Mammary epithelial cell (primary cell): ENCODE measurements at regions of chr7 and their contacts with region 1.

Region 1: GRCh38 chr7:84194543-84195271 is at the start of gene SEMA3A:
- DNase-seq: peak; percentile 93
- H3K4me3 ChIP-seq: peak within 1 kb of the TSS; percentile 45 to 84 (median 72)
- H3K27ac ChIP-seq: peak within 1 kb of the TSS; percentile 90
- H3K4me1 ChIP-seq: peaks cover 12% of the 10 kb centered on the region
- H3K27me3 ChIP-seq: no peaks in the 10 kb centered on the region
- CTCF ChIP-seq: no peak
- total RNA-seq, gene SEMA3A: 0.83 to 12.8 TPM

Region 2: GRCh38 chr7:83695128-83695960 is 499.4 kb before region 1 on chr7:
- CTCF ChIA-PET with region 1: no interaction called
- dilution Hi-C with region 1: no loop called
- in situ Hi-C with region 1: no loop called
- intact Hi-C with region 1: no loop called
- DNase-seq: no peak
- H3K4me3 ChIP-seq: no peak overlapping the region
- H3K27ac ChIP-seq: no peak overlapping the region
- H3K4me1 ChIP-seq: no peaks in the 10 kb centered on the region
- H3K27me3 ChIP-seq: no peaks in the 10 kb centered on the region
- CTCF ChIP-seq: no peak

Region 3: GRCh38 chr7:84025332-84025927 is 169.3 kb before region 1 on chr7:
- CTCF ChIA-PET with region 1: no interaction called
- dilution Hi-C with region 1: no loop called
- in situ Hi-C with region 1: loop called in 1 of 2 experiments (anchors 25 kb)
- intact Hi-C with region 1: no loop called
- DNase-seq: peak; percentile 89
- H3K4me3 ChIP-seq: no peak overlapping the region
- H3K27ac ChIP-seq: peak overlapping the region; percentile 39
- H3K4me1 ChIP-seq: peaks cover 23% of the 10 kb centered on the region
- H3K27me3 ChIP-seq: no peaks in the 10 kb centered on the region
- CTCF ChIP-seq: no peak

Region 4: DNA sequence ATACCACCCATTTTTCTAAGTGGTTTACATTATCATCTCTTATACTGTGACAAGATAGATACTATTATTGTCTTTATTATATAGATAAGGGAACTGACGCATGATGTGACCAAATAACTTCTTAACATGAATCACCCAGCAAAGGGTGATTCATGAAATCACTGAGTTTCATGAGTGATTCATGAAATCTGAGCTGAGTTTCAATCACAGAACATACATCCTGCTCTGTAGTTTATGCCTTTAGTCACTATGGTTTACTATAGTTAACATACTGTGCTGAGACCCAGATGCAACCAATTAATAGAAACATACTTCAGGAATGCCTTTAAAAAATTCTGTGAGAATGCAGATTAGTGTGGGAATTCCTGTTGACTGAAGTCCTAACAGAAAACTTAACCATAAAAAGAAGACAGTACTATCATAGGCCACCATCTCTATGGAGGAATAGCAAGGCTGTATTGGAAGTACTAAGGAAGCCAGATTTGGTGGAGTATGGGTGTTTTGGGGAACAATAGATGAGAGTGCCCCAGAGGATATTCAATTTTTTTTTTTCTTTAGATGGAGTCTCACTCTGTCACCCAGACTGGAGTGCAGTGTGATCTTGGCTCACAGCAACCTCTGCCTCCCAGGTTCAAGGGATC is 42.9 kb after region 1 on chr7:
- CTCF ChIA-PET with region 1: no interaction called
- dilution Hi-C with region 1: no loop called
- in situ Hi-C with region 1: no loop called
- intact Hi-C with region 1: loop called (anchors 5 kb)
- DNase-seq: peak; percentile 97
- H3K4me3 ChIP-seq: no peak overlapping the region
- H3K27ac ChIP-seq: peak overlapping the region; percentile 99
- H3K4me1 ChIP-seq: peaks cover 24% of the 10 kb centered on the region
- H3K27me3 ChIP-seq: no peaks in the 10 kb centered on the region
- CTCF ChIP-seq: no peak

Region 5: GRCh38 chr7:84281518-84281917 is 86.8 kb after region 1 on chr7:
- CTCF ChIA-PET with region 1: no interaction called
- dilution Hi-C with region 1: no loop called
- in situ Hi-C with region 1: no loop called
- intact Hi-C with region 1: no loop called
- DNase-seq: no peak
- H3K4me3 ChIP-seq: no peak overlapping the region
- H3K27ac ChIP-seq: no peak overlapping the region
- H3K4me1 ChIP-seq: no peaks in the 10 kb centered on the region
- H3K27me3 ChIP-seq: no peaks in the 10 kb centered on the region
- CTCF ChIP-seq: no peak

Region 6: DNA sequence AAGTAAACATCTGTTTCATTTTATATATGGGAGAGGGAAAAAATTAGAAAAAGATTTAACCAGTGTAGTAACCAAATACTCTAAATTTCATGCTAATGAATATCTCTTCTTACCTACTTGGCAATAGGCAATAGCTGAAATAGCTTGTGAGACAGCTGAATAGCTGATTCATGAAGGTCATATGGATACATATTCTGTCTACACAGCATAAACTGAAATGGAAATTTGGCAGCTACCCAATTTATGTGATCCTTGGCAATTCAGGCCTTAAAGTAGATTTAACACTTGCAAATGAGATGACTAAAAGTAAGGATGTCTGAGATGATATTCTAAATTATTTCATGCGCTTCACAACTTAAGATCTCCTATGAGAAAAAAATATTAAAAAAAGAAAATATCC is 261.1 kb after region 1 on chr7:
- CTCF ChIA-PET with region 1: no interaction called
- dilution Hi-C with region 1: no loop called
- in situ Hi-C with region 1: no loop called
- intact Hi-C with region 1: loop called (anchors 5 kb)
- DNase-seq: peak; percentile 1
- H3K4me3 ChIP-seq: no peak overlapping the region
- H3K27ac ChIP-seq: no peak overlapping the region
- H3K4me1 ChIP-seq: no peaks in the 10 kb centered on the region
- H3K27me3 ChIP-seq: no peaks in the 10 kb centered on the region
- CTCF ChIP-seq: no peak